Sigmoid colon (tissue), 7 donors: ENCODE measurements at regions of chr11 and their contacts with region 1.

Region 1: DNA sequence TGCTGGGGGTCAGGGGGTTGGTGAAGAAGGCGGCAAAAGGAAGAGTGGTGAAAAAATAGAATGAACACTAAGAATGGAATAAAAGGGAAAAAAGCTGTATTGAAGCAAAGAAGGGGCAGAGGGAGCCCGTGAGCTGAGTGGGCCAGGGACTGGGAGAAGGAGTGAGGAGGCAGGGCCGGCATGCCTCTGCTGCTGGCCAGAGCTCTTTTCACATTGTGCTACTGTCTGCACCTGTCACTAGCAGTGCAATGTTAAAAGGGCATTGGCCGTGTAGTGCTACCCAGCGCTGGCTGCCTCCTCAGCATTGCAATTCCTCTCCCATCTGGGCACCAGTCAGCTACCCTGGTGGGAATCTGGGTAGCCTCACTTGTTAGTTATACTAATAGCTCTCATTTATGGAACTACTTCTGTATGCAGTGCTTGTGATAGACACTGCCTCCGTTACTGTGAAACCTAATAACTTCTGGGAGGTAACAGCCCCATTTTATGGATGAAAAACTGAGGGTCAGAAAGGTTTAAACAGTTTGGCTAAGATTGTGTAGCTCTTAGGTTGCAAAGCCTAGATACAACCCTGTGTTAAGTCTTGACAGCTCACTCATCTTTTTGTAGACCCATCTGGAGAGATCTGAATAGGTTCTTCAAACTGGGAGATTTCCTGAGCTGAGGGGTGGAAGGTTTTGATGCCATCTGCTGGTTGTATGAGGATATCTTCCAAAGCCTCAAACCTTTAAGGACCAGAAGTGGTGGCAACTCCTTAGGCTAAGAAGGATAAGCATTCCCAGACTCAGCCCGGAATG is 8.5 kb downstream of the YPEL4 start:
- DNase-seq: peak; percentile 68
- H3K4me3 ChIP-seq: no peak overlapping the region
- H3K27ac ChIP-seq: peak overlapping the region in 1 of 4 donors; percentile 1
- H3K4me1 ChIP-seq: peaks cover 0 to 54% (median 52%) of the 10 kb centered on the region in 4 donors
- H3K27me3 ChIP-seq: peaks cover 0 to 9% (median 4%) of the 10 kb centered on the region in 3 donors
- CTCF ChIP-seq: peak; percentile 17 to 45 (median 35)
- EP300 ChIP-seq: no peak
- POLR2A ChIP-seq: no peak

Region 2: DNA sequence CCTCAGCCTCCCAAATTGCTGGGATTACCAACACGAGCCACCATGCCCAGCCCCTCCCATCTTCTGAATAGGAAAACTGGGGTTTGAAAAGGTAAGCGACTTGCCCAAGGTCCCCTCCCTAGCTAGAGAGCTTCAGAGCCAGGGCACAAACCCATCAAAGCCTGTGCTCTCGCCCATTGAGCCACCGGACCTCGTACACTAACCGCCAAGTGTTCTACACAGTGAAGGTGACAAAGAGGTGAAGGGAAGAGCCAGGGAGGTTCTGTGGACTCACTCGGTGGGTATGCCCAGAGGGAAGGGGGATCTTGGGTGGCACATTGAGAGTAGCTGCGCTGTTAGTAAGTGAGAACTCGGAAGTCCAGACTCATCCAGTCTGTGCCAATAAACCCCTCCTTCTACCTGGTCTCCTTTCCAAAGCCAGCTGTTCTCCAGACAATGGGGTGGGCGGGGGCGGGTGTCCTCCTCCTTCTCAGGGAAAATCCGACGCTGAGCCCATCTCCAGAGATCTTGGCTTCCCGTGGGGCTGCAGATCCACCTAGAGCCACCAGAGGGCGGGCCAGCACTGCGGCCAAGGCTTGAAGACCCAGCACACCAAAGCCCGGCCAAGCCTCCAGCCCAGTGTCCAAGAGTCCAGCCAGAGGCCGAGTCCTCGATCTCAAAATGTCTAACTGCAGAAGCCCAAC is 184.1 kb before region 1 on chr11:
- intact Hi-C with region 1: loop called (anchors 2 kb)
- DNase-seq: peak; percentile 94
- H3K4me3 ChIP-seq: no peak overlapping the region
- H3K27ac ChIP-seq: no peak overlapping the region
- H3K4me1 ChIP-seq: peaks cover 0 to 45% (median 42%) of the 10 kb centered on the region in 4 donors
- H3K27me3 ChIP-seq: peaks cover 34 to 60% (median 38%) of the 10 kb centered on the region in 3 donors
- CTCF ChIP-seq: peak; percentile 87 to 99 (median 92)
- EP300 ChIP-seq: no peak
- POLR2A ChIP-seq: no peak

Region 3: GRCh38 chr11:57493507-57494503 is 147.4 kb before region 1 on chr11:
- intact Hi-C with region 1: no loop called
- DNase-seq: peak; percentile 81
- H3K4me3 ChIP-seq: no peak overlapping the region
- H3K27ac ChIP-seq: no peak overlapping the region
- H3K4me1 ChIP-seq: peaks cover 2 to 6% (median 3%) of the 10 kb centered on the region in 4 donors
- H3K27me3 ChIP-seq: no peaks in the 10 kb centered on the region
- CTCF ChIP-seq: peak; percentile 58 to 89 (median 74)
- EP300 ChIP-seq: no peak
- POLR2A ChIP-seq: no peak

Region 4: DNA sequence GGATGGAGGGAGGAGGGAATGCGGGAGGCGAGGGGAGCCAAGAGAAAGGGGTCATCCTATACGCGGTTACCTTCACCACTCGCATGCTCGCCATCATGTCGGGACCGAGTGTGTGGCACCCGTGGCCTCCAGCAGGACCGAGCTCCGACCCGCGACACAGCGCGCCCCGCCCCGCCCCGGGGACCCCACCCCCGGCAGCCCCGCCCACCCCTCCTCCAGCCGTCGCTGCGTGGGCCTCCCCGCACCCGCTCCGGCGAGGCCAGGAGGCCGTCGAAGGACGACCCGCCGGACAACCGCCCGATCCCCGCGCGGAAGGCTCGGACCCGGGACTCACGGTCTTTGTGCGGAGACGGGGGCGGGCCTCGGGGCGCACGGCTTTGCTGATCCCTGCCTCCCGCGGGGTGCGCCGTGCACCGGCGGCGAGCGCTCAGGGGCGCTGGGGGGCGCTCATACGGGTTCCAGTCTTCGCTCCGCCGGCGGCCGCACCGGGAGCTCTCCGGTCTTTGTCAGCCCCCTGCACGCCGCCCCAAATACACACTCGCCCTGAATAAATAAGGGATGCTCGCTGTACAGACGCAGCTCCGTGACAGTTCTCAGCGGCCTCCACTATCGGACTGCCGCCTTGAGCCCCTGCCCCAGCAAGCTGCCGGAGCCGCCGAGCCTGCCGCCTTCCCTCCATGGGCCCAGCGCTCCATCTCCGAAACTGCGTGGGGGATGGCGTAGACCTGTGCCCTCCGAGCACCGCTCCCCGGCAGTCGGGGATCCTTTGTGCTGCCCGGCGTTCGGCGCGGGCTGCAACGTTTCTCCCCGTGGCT is 73.5 kb before region 1 on chr11 and contains the start of gene UBE2L6:
- intact Hi-C with region 1: loop called (anchors 1 kb)
- DNase-seq: peak; percentile 74
- H3K4me3 ChIP-seq: peak within 1 kb of the TSS; percentile 66 to 94 (median 76)
- H3K27ac ChIP-seq: peak within 1 kb of the TSS; percentile 83 to 86 (median 85)
- H3K4me1 ChIP-seq: peaks cover 0 to 26% (median 19%) of the 10 kb centered on the region in 4 donors
- H3K27me3 ChIP-seq: no peaks in the 10 kb centered on the region
- CTCF ChIP-seq: peak in 2 of 4 experiments; percentile 82 to 92
- EP300 ChIP-seq: no peak
- POLR2A ChIP-seq: no peak
- total RNA-seq, gene UBE2L6: 26.5 to 37.8 (median 32.5) TPM

Region 5: GRCh38 chr11:57597916-57598830 is 43.0 kb before region 1 on chr11:
- intact Hi-C with region 1: loop called (anchors 2 kb)
- DNase-seq: peak; percentile 95
- H3K4me3 ChIP-seq: peak overlapping the region; percentile 48 to 76 (median 64)
- H3K27ac ChIP-seq: peak overlapping the region; percentile 79 to 93 (median 89)
- H3K4me1 ChIP-seq: peaks cover 0 to 22% (median 13%) of the 10 kb centered on the region in 4 donors
- H3K27me3 ChIP-seq: no peaks in the 10 kb centered on the region
- CTCF ChIP-seq: no peak
- EP300 ChIP-seq: no peak
- POLR2A ChIP-seq: no peak